Spleen (tissue), 13 donors: ENCODE measurements at regions of chr5 and their contacts with region 1.

Region 1: GRCh38 chr5:180860887-180861822 is at the start of gene ZFP62:
- DNase-seq: peak; percentile 99
- H3K4me3 ChIP-seq: peak within 1 kb of the TSS; percentile 64 to 98 (median 90)
- H3K27ac ChIP-seq: peak within 1 kb of the TSS; percentile 90 to 98 (median 95)
- H3K4me1 ChIP-seq: peaks cover 0 to 27% (median 15%) of the 10 kb centered on the region in 6 donors
- H3K27me3 ChIP-seq: no peaks in the 10 kb centered on the region
- CTCF ChIP-seq: peak in 4 of 11 experiments; percentile 17 to 47 (median 32)
- POLR2A ChIP-seq: peak; percentile 26 to 64 (median 26)
- total RNA-seq, gene ZFP62: 26.0 to 31.5 (median 28.5) TPM

Region 2: DNA sequence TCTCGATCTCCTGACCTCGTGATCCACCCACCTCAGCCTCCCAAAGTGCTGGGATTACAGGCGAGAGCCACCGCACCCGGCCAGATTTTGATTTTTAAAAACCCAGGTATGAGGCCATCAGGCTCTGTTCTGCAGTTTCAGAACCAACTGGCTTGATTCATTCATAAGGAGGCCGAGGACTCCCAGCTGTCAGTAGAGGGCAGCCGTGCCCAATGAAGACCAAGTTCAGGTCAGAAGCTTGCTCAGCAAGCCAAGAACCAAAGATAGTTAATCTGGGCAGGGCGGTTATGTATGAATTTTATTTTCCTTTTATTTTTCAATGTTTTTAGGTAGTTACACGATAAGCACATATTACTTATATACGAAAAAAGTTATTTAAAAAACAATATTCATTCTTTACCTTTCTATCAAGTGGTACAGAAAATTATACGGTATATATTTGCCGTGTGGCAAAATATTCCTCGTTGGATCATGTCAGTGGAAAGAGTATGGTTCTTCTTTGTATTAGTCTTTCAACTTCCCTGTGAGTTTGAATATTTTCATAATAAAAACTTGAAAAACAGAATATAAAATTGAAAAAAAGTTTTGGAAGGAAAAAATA is 76.6 kb before region 1 on chr5:
- intact Hi-C with region 1: loop called (anchors 5 kb)
- DNase-seq: peak; percentile 91
- H3K4me3 ChIP-seq: no peak overlapping the region
- H3K27ac ChIP-seq: peak overlapping the region in 4 of 8 donors; percentile 42 to 77 (median 67)
- H3K4me1 ChIP-seq: peaks cover 25 to 54% (median 51%) of the 10 kb centered on the region in 6 donors
- H3K27me3 ChIP-seq: no peaks in the 10 kb centered on the region
- CTCF ChIP-seq: peak; percentile 36 to 81 (median 70)
- POLR2A ChIP-seq: no peak

Region 3: GRCh38 chr5:181159830-181160754 is 298.9 kb after region 1 on chr5:
- intact Hi-C with region 1: loop called (anchors 10 kb)
- DNase-seq: peak; percentile 90
- H3K4me3 ChIP-seq: peak overlapping the region in 3 of 8 donors; percentile 5 to 65 (median 8)
- H3K27ac ChIP-seq: peak overlapping the region in 7 of 8 donors; percentile 41 to 91 (median 73)
- H3K4me1 ChIP-seq: peaks cover 0 to 21% (median 17%) of the 10 kb centered on the region in 6 donors
- H3K27me3 ChIP-seq: peaks cover 0 to 52% (median 7%) of the 10 kb centered on the region in 7 donors
- CTCF ChIP-seq: no peak
- POLR2A ChIP-seq: no peak